Mucosa of descending colon (tissue), 3 donors: ENCODE measurements at regions of chr17 and their contacts with region 1.

Region 1: GRCh38 chr17:81394921-81395599 is at the start of gene BAHCC1:
- DNase-seq: peak; percentile 100
- ATAC-seq: peak; percentile 76
- H3K4me3 ChIP-seq: peak within 1 kb of the TSS; percentile 54
- H3K4me1 ChIP-seq: peaks cover 39% of the 10 kb centered on the region
- CTCF ChIP-seq: no peak
- total RNA-seq, gene BAHCC1: 14.0 to 27.4 (median 16.5) TPM

Region 2: DNA sequence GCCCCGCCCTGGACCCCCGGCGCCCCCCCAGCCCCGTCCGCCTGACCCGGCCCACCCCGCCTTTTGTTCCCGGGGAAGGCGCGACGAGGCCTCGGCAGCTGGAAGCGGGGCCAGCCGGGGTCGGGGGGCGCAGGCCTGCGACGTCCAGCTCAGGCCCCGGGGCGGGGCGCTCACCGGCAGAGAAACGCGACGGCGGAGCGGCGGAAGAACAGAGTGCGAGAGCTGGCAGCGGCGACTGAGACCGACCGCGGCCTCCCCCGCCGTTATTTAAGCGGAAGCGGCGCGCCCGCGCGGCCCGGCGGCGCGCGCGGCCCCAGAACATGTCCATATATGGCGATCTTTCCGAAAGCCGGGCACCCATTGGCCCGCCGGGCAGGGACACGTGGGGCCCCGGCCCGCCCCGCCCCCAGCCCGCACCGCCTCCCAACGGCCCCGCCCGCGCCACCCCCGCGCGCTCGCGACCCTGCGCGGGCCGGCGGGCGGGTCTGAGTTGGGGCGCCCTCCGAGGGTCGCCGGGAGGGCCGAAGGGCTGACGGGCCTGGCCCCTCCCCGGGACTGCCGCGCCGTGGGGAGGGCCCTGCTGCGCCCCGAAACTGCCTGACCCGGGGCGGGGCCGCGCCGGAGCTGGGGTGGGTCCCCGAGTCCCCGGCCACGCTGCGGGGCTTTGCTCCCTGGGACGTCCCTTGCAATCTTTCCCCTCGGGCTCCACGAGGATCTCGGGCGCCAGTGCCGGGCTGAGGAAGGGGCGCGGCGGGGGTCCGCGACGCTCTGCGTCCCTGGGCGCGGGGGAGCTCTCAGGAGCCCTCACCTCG is 117.7 kb after region 1 on chr17 and contains the start of gene ACTG1:
- intact Hi-C with region 1: loop called in 1 of 2 experiments (anchors 10 kb)
- DNase-seq: peak; percentile 91 to 96 (median 96)
- ATAC-seq: peak; percentile 60
- H3K4me3 ChIP-seq: peak within 1 kb of the TSS; percentile 98
- H3K4me1 ChIP-seq: peaks cover 28% of the 10 kb centered on the region
- CTCF ChIP-seq: no peak
- total RNA-seq, gene ACTG1: 1,922 to 4,060 (median 3,184) TPM